GM10248 (cell line): ENCODE measurements at regions of chr12 and their contacts with region 1.

Region 1: DNA sequence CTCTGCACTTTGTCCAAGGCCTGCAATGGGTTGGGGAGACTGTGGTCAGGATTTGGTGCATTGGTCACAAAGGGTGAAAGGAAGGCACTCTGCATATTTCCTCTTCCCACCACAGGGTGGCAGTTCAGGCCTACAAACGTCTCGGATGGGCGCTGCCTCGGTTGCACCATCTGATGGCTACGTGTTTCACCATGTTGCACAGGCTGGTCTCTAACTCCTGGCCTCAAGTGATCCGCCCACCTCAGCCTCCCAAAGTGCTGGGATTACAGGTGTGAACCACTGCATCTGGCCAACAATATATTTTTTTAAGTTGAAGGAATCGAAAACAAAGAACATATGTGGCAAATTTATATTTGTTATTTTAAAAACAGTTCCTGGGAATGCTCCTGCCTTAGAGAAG is 35.1 kb downstream of the TMBIM6 start:
- DNase-seq: peak; percentile 78
- CTCF ChIP-seq: peak; percentile 79

Region 2: DNA sequence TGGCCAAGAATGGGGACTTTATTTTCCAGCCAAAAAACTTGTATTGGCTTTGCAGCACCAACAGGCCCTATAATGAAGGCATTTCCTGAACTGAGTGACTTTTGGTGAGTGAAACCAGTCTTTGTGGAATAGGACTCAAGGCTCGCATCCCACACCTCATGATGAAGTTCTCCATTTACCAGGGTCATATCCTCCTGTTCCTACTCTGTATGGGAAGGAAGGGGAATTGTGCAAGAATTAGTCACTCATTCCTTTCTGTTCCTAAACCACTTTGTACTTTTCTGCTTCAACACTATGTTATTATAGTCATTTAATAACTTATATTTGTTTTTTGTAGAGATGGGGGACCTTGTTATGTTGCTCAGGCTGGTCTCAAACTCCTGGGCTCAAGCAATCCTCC is 411.4 kb before region 1 on chr12:
- CTCF ChIA-PET with region 1: no interaction called
- POLR2A ChIA-PET with region 1: no interaction called
- DNase-seq: no peak
- CTCF ChIP-seq: no peak

Region 3: DNA sequence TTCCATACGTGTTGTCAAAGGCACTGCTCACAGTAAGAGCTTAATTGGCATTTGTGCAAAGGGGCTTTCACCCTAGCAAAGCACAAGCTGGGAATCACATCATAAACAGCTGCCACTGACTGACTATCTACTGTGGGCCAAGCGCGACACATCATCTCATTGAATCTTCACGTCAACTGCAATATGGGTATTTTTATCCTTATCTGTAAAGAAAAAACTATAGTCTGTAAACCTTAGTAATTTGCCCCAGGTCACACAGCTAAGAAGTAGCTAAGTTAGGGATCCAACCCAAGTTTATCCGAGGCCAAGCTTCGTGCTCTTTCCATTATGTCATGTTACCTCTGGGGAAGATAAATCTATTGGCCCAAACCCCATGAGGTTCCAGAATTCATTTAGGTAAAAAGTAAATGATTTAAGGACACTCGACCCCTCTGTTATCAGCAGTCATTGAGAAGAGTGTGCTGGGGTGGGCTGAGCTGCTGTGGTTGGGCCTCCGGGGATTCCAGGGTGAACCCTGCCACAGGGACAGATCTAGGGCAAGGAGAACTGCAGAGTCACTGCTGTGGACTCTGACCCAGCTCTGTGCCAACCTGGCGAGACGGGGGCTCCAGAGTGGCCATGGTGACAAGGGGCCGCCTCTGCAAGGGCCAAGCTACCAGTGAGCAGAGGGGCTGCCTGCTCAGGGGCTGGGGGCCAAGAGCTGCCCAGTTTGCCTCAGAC is 24.2 kb after region 1 on chr12:
- CTCF ChIA-PET with region 1: interaction called, 34 read pairs
- POLR2A ChIA-PET with region 1: no interaction called
- DNase-seq: no peak
- CTCF ChIP-seq: no peak